ENCODE measurements at regions of chr17 and their contacts with region 1.

Region 1: GRCh38 chr17:68849673-68850610 is 105.2 kb downstream of the ABCA8 start:
- DNase-seq: no peak
- ATAC-seq: no peak
- H3K4me3 ChIP-seq: no peak overlapping the region
- H3K27ac ChIP-seq: peak overlapping the region in 4 of 10 donors; percentile 6 to 77 (median 56)
- H3K4me1 ChIP-seq: peaks cover 0 to 27% (median 6%) of the 10 kb centered on the region in 9 donors
- H3K27me3 ChIP-seq: no peaks in the 10 kb centered on the region
- CTCF ChIP-seq: no peak

Region 2: GRCh38 chr17:68794636-68795434 is 55.1 kb before region 1 on chr17:
- intact Hi-C with region 1: loop called in 1 of 10 experiments (anchors 10 kb)
- DNase-seq: peak in 1 of 2 donors; percentile 53
- ATAC-seq: peak; percentile 45 to 84 (median 74)
- H3K4me3 ChIP-seq: peak overlapping the region in 1 of 10 donors; percentile 12
- H3K27ac ChIP-seq: peak overlapping the region; percentile 53 to 89 (median 74)
- H3K4me1 ChIP-seq: peaks cover 0 to 55% (median 33%) of the 10 kb centered on the region in 9 donors
- H3K27me3 ChIP-seq: peaks cover 0 to 6% (median 0%) of the 10 kb centered on the region in 7 donors
- CTCF ChIP-seq: peak in 7 of 9 donors; percentile 34 to 52 (median 44)

Region 3: GRCh38 chr17:68807998-68808772 is 41.8 kb before region 1 on chr17:
- intact Hi-C with region 1: loop called in 1 of 10 experiments (anchors 5 kb)
- DNase-seq: no peak
- ATAC-seq: peak in 6 of 8 donors; percentile 21 to 79 (median 64)
- H3K4me3 ChIP-seq: no peak overlapping the region
- H3K27ac ChIP-seq: peak overlapping the region in 7 of 10 donors; percentile 15 to 82 (median 49)
- H3K4me1 ChIP-seq: peaks cover 0 to 28% (median 7%) of the 10 kb centered on the region in 9 donors
- H3K27me3 ChIP-seq: no peaks in the 10 kb centered on the region
- CTCF ChIP-seq: no peak

Region 4: GRCh38 chr17:68821860-68822696 is 27.9 kb before region 1 on chr17:
- intact Hi-C with region 1: loop called in 1 of 10 experiments (anchors 2 kb)
- DNase-seq: no peak
- ATAC-seq: peak in 1 of 8 donors; percentile 80
- H3K4me3 ChIP-seq: no peak overlapping the region
- H3K27ac ChIP-seq: peak overlapping the region in 4 of 10 donors; percentile 15 to 77 (median 34)
- H3K4me1 ChIP-seq: peaks cover 0 to 18% (median 3%) of the 10 kb centered on the region in 9 donors
- H3K27me3 ChIP-seq: no peaks in the 10 kb centered on the region
- CTCF ChIP-seq: no peak

Region 5: GRCh38 chr17:68941761-68942160 is 91.8 kb after region 1 on chr17:
- intact Hi-C with region 1: no loop called
- DNase-seq: no peak
- ATAC-seq: no peak
- H3K4me3 ChIP-seq: no peak overlapping the region
- H3K27ac ChIP-seq: no peak overlapping the region
- H3K4me1 ChIP-seq: peaks cover 0 to 6% (median 0%) of the 10 kb centered on the region in 9 donors
- H3K27me3 ChIP-seq: no peaks in the 10 kb centered on the region
- CTCF ChIP-seq: no peak